Caco-2 (cell line): ENCODE measurements at regions of chr3 and their contacts with region 1.

Region 1: GRCh38 chr3:9986237-9986725 is 360 bp downstream of the EMC3 start:
- DNase-seq: no peak
- H3K4me3 ChIP-seq: peak overlapping the region; percentile 95
- H3K4me3 Mint-ChIP-seq: peak overlapping the region; percentile 93
- H3K27ac Mint-ChIP-seq: peak overlapping the region; percentile 98
- H3K4me1 ChIP-seq: peaks cover 3% of the 10 kb centered on the region; the same call in 1 of the 2 replicates
- H3K4me1 Mint-ChIP-seq: no peaks in the 10 kb centered on the region
- H3K27me3 ChIP-seq: no peaks in the 10 kb centered on the region
- H3K27me3 Mint-ChIP-seq: no peaks in the 10 kb centered on the region
- CTCF ChIP-seq: no peak

Region 2: DNA sequence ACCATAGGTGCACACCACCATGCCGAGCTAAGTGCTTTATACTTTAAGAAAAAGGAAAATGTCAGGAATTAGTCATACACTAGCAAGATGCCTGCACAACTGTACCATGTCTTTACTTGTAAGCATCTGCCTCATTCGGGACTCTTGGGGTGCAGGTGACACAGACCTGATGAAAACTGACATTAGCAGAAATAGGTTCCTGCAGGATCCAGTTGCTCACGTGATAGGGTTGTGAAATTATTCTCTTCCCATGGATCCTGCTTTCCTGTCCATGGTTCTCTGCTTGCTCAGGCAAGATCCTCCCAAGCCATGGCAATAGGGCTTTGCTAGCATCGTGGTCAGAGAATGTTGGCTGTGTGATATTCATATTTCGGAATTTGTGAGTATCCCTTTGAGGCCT is 422.4 kb before region 1 on chr3:
- CTCF ChIA-PET with region 1: no interaction called
- POLR2A ChIA-PET with region 1: no interaction called
- intact Hi-C with region 1: no loop called
- DNase-seq: no peak
- H3K4me3 ChIP-seq: no peak overlapping the region
- H3K4me3 Mint-ChIP-seq: no peak overlapping the region
- H3K27ac Mint-ChIP-seq: no peak overlapping the region
- H3K4me1 ChIP-seq: no peaks in the 10 kb centered on the region
- H3K4me1 Mint-ChIP-seq: no peaks in the 10 kb centered on the region
- H3K27me3 ChIP-seq: no peaks in the 10 kb centered on the region
- H3K27me3 Mint-ChIP-seq: no peaks in the 10 kb centered on the region
- CTCF ChIP-seq: no peak

Region 3: DNA sequence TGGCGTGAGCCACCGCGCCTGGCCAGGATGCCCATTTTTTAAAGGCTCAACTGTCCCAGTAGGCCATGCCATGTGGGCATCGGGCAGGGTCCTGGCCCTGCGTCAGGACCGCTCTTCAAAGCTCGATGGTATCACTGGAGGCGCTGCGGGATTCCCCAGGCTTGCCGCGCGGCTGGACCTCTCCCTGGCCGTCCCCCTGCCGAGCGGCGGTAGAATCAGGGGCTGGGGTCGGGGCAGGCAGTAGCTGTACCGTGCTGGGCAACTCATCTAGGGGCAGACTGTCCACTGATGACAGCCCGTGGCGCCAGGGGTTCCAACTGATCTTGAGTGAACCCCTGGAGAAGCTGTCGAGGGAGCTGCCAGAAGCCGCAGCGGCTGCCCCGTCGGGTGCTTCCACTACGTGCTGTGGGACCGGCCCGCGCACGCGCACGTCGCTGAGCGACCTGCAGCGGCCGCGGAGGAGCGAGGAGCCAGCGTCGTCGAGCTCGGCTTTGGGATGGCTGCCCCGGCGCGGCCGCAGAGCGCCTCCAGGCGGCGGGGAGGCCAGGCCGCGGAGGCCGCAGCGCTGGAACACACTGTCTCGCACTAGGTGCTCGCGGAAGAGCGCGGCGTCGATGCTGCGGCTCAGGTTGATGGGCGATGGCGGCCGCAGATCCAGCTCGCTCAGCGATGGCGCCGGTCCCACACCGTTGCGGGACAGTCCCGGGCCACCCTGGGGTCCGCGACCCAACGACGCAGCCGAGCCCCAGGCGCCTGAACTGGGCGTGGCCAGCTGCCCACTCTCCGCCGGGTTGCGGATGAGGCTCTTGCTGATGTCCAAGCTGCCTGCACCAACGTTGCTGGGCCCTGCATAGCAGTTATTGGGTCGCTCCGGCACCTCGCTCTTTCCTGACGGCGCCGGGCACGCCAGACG is 39.9 kb before region 1 on chr3:
- CTCF ChIA-PET with region 1: no interaction called
- POLR2A ChIA-PET with region 1: interaction called, 13 read pairs
- intact Hi-C with region 1: no loop called
- DNase-seq: peak; percentile 89 to 93
- H3K4me3 ChIP-seq: peak overlapping the region; percentile 60
- H3K4me3 Mint-ChIP-seq: peak overlapping the region; percentile 83
- H3K27ac Mint-ChIP-seq: peak overlapping the region; percentile 83
- H3K4me1 ChIP-seq: 0 out of 2 replicates have a peak, but pooled peaks cover 6% of the 10 kb centered on the region
- H3K4me1 Mint-ChIP-seq: no peaks in the 10 kb centered on the region
- H3K27me3 ChIP-seq: no peaks in the 10 kb centered on the region
- H3K27me3 Mint-ChIP-seq: no peaks in the 10 kb centered on the region
- CTCF ChIP-seq: peak; percentile 50 to 56

Region 4: DNA sequence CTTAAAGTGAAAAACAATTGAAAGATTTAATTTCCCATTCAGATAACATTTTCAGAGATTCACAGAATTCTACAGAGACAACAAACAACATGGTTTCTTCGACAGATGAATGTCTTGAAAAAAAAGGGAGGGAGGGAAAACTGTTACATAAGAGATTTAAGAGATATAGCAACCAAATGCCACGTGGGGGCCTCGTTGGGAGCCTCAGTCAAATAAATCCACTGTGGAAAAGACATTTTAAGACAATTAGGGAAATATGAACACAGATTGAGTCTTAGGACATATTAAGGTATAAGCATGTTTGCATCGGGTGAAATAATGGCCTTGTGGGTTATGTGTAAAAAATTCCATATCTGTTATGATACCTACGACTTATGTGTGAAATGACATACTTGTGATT is 29.1 kb before region 1 on chr3:
- CTCF ChIA-PET with region 1: no interaction called
- POLR2A ChIA-PET with region 1: no interaction called
- intact Hi-C with region 1: no loop called
- DNase-seq: no peak
- H3K4me3 ChIP-seq: no peak overlapping the region
- H3K4me3 Mint-ChIP-seq: no peak overlapping the region
- H3K27ac Mint-ChIP-seq: no peak overlapping the region
- H3K4me1 ChIP-seq: no peaks in the 10 kb centered on the region
- H3K4me1 Mint-ChIP-seq: no peaks in the 10 kb centered on the region
- H3K27me3 ChIP-seq: no peaks in the 10 kb centered on the region
- H3K27me3 Mint-ChIP-seq: no peaks in the 10 kb centered on the region
- CTCF ChIP-seq: no peak

Region 5: GRCh38 chr3:10010486-10011465 is 24.5 kb after region 1 on chr3:
- CTCF ChIA-PET with region 1: no interaction called
- POLR2A ChIA-PET with region 1: interaction called, 8 read pairs
- intact Hi-C with region 1: loop called (anchors 2 kb)
- DNase-seq: peak; percentile 96 to 97
- H3K4me3 ChIP-seq: peak overlapping the region; percentile 54
- H3K4me3 Mint-ChIP-seq: peak overlapping the region; percentile 71
- H3K27ac Mint-ChIP-seq: no peak overlapping the region
- H3K4me1 ChIP-seq: no peaks in the 10 kb centered on the region
- H3K4me1 Mint-ChIP-seq: peaks cover 8% of the 10 kb centered on the region
- H3K27me3 ChIP-seq: no peaks in the 10 kb centered on the region
- H3K27me3 Mint-ChIP-seq: no peaks in the 10 kb centered on the region
- CTCF ChIP-seq: no peak